ENCODE measurements at regions of chr7 and their contacts with region 1.

Region 1: GRCh38 chr7:142669074-142669654 is 80.1 kb upstream of the PRSS1 start:
- DNase-seq: no peak
- H3K4me3 ChIP-seq: no peak overlapping the region
- H3K27ac ChIP-seq: no peak overlapping the region
- H3K4me1 ChIP-seq: peaks cover 3 to 23% (median 9%) of the 10 kb centered on the region in 6 donors
- H3K27me3 ChIP-seq: no peaks in the 10 kb centered on the region
- CTCF ChIP-seq: peak in 7 of 11 experiments; percentile 14 to 50 (median 32)
- POLR2A ChIP-seq: no peak

Region 2: GRCh38 chr7:142811154-142811737 is 142.1 kb after region 1 on chr7:
- intact Hi-C with region 1: loop called (anchors 10 kb)
- DNase-seq: no peak
- H3K4me3 ChIP-seq: no peak overlapping the region
- H3K27ac ChIP-seq: peak overlapping the region in 7 of 8 donors; percentile 80 to 98 (median 91)
- H3K4me1 ChIP-seq: peaks cover 16 to 74% (median 55%) of the 10 kb centered on the region in 6 donors
- H3K27me3 ChIP-seq: peaks cover 0 to 16% (median 0%) of the 10 kb centered on the region in 7 donors
- CTCF ChIP-seq: peak; percentile 33 to 79 (median 61)
- POLR2A ChIP-seq: no peak

Measured in spleen (tissue), 13 donors.